AG04449 (cell line): ENCODE measurements at regions of chr2 and their contacts with region 1.

Region 1: GRCh38 chr2:20642055-20642971 is 8.6 kb downstream of the HS1BP3 start:
- DNase-seq: no peak
- H3K4me3 ChIP-seq: no peak overlapping the region
- CTCF ChIP-seq: peak; percentile 95

Region 2: GRCh38 chr2:20326163-20326780 is 316.0 kb before region 1 on chr2:
- CTCF ChIA-PET with region 1: interaction called, 12 read pairs
- POLR2A ChIA-PET with region 1: no interaction called
- DNase-seq: no peak
- H3K4me3 ChIP-seq: no peak overlapping the region
- CTCF ChIP-seq: peak; percentile 88

Region 3: DNA sequence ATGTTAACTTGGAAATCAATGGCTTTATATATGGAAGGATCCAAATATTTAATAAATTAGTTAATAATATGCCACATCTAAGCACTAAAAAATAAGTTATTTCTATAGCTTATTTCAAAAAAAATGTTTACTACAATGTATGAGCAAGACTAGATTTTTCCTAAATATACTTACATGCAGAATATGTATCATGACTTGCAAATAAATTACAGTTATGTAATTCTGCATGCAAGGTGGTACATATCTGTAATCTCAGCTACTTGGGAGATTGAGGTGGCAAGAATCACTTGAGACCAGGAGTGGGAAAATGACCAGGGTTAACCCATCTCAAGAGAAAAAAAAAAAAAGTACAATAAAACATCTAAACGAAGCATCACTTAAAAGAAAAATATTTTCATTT is 303.3 kb before region 1 on chr2:
- CTCF ChIA-PET with region 1: no interaction called
- POLR2A ChIA-PET with region 1: no interaction called
- DNase-seq: no peak
- H3K4me3 ChIP-seq: no peak overlapping the region
- CTCF ChIP-seq: no peak

Region 4: DNA sequence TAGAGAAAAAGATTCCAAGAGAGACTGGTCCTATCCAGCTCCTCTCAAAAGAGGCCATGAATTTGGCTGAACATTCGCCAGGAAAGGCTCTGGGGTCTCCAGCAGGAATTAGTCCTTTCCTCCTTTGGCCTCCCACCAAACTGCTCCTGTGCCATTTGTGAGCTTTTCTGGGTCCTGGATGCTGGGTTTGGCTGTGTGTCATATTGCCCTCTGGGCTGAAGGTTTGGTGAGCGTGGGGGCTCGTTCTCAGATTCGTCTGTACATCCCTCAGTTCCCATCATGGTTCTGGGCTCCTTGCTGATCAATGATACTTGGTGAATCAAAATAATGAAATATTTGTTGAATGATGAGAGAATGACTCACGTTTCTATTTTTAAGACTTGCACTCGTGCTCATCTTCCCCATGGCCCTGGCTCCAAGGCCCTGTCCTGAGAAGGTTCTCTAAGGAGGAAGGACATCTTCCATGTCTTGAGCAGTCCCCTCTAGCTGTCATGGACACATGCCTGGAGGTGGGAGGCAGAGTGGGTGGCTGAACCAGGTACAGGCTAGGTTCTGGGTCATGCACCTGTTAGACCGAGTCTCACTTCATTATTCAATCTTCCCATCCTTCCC is 243.3 kb before region 1 on chr2:
- CTCF ChIA-PET with region 1: interaction called, 79 read pairs
- POLR2A ChIA-PET with region 1: no interaction called
- DNase-seq: no peak
- H3K4me3 ChIP-seq: no peak overlapping the region
- CTCF ChIP-seq: no peak

Region 5: GRCh38 chr2:20411361-20411894 is 230.9 kb before region 1 on chr2:
- CTCF ChIA-PET with region 1: interaction called, 161 read pairs
- POLR2A ChIA-PET with region 1: no interaction called
- DNase-seq: no peak
- H3K4me3 ChIP-seq: no peak overlapping the region
- CTCF ChIP-seq: peak; percentile 86

Region 6: DNA sequence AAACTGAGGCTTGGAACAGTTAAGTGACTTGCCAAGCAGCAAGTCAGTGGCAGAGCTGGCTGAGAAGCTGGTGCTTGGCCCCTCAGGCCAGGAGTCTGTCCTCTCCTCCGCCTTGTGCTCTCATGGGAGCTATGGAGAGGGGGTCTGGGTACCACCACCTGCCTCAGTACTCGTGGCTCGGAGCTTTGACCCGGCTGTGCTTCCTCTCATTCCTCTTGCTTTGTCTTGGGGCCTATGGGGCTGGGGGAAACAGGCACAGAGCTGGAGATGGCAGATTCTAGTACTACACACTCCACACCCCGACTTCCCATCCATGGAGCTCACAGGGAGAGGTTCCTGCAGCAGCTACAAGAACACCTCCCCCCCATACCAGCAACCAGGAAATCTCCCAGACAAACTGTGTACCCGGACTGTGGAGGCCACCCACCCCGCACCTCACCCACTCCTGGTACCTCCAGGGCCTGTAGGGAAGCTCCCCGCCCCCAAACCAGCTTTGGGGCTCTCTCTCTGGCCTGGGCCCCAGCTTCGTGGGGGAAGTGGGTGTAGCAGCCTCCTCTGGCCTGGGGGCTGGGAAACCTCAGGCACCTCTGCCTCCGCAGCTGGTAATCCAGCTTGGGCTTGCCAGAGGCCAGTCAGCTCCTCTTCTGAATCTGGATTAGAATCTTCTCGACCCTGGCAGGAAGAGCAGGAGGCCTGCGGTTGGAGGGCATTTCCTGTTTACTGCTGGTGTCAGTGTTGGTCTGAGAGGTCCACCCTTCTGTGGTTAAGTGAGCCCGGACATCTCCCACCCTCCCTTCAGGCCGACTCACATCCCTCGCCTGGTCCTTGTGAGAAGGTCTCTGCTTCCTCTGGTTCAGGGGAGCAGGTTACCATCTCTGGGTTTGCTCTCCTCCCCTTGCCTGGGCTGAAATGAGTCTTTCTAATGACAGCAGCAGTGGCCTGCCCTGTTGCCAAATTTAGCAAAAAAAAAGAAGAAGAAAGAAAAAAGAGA is 217.7 kb before region 1 on chr2:
- CTCF ChIA-PET with region 1: interaction called, 83 read pairs
- POLR2A ChIA-PET with region 1: no interaction called
- DNase-seq: no peak
- H3K4me3 ChIP-seq: no peak overlapping the region
- CTCF ChIP-seq: no peak

Region 7: GRCh38 chr2:20617892-20618467 is 24.3 kb before region 1 on chr2:
- CTCF ChIA-PET with region 1: interaction called, 25 read pairs
- POLR2A ChIA-PET with region 1: no interaction called
- DNase-seq: peak; percentile 95
- H3K4me3 ChIP-seq: no peak overlapping the region
- CTCF ChIP-seq: peak; percentile 59

Region 8: GRCh38 chr2:21096458-21096857 is 454.1 kb after region 1 on chr2:
- CTCF ChIA-PET with region 1: no interaction called
- POLR2A ChIA-PET with region 1: no interaction called
- DNase-seq: no peak
- H3K4me3 ChIP-seq: no peak overlapping the region
- CTCF ChIP-seq: no peak